GM12878 (cell line): ENCODE measurements at regions of chr3 and their contacts with region 1.

Region 1: DNA sequence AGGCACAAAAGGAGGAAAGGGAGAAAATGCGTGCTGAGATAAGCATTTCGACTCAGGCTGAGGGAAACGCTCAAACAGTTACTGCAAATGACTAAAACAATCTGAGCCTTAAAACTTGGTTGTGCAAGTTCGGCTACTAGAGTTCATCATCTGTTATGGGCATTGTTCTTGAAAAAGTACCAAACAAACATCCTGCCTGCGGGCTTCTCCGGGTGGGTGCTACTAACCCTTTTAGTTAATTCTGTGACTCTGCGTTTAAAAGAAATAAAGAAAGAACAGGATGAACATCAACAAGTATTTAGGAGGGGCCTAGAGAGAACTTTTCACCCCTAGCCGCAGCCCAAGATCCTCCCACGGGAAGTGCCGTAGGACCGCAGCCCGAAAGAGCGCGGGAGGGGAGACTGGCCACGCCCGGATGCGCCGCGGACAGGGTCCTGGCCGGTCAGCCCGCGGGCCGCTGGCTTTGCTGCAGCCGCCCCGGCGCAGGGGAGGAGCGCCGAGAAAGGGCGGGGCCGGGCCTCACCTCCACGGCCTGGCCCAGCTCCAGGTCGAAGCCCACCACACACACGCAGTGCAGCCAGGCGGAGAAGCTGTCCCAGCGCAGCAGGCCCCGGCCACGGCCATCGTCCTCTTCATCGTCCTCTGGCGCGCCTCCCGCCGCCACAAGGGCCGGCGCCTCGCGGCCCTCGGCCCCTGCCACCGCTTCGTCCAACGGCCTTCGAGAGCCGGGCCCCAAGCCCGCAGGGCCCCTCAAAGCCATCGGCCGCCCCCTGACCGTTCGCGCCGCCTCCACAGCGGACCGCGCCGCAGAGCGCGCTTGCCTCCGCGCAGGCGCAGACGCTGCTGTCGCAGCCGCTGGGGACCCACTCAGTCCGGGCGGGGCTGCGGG is at the start of gene DENND6A:
- DNase-seq: peak; percentile 69
- ATAC-seq: peak; percentile 91
- H3K4me3 ChIP-seq: peak within 1 kb of the TSS; percentile 72
- H3K27ac ChIP-seq: peak within 1 kb of the TSS; percentile 88
- H3K4me1 ChIP-seq: peaks cover 15% of the 10 kb centered on the region; the same call in 1 of the 2 replicates
- H3K27me3 ChIP-seq: no peaks in the 10 kb centered on the region
- CTCF ChIP-seq: no peak
- EP300 ChIP-seq: no peak
- POLR2A ChIP-seq: peak; percentile 92
- RAD21 ChIP-seq: no peak
- polyA plus RNA-seq, gene DENND6A: 1.8 to 3.5 TPM

Region 2: GRCh38 chr3:57555738-57556458 is 136.6 kb before region 1 on chr3 and contains the start of gene PDE12:
- CTCF ChIA-PET with region 1: interaction called, 4 read pairs
- POLR2A ChIA-PET with region 1: no interaction called
- RAD21 ChIA-PET with region 1: interaction called, 9 read pairs
- SMC1A ChIA-PET with region 1: interaction called, 7 read pairs
- in situ Hi-C with region 1: no loop called
- intact Hi-C with region 1: loop called (anchors 5 kb)
- DNase-seq: peak; percentile 95
- ATAC-seq: peak; percentile 92
- H3K4me3 ChIP-seq: peak within 1 kb of the TSS; percentile 76
- H3K27ac ChIP-seq: peak within 1 kb of the TSS; percentile 99
- H3K4me1 ChIP-seq: no peaks in the 10 kb centered on the region; the same call in none of the 2 replicates
- H3K27me3 ChIP-seq: no peaks in the 10 kb centered on the region
- CTCF ChIP-seq: no peak
- EP300 ChIP-seq: peak in 1 of 2 experiments; percentile 100; a peak in 3 of 4 replicates
- POLR2A ChIP-seq: peak; percentile 98
- RAD21 ChIP-seq: no peak
- polyA plus RNA-seq, gene PDE12: 3.0 to 10.1 TPM

Region 3: GRCh38 chr3:57597122-57597923 is 95.2 kb before region 1 on chr3 and contains the start of gene ARF4:
- CTCF ChIA-PET with region 1: interaction called, 5 read pairs
- POLR2A ChIA-PET with region 1: interaction called, 14 read pairs
- RAD21 ChIA-PET with region 1: interaction called, 6 read pairs
- SMC1A ChIA-PET with region 1: interaction called, 4 read pairs
- in situ Hi-C with region 1: no loop called
- intact Hi-C with region 1: loop called (anchors 1 kb)
- DNase-seq: peak; percentile 99
- ATAC-seq: peak; percentile 92
- H3K4me3 ChIP-seq: peak within 1 kb of the TSS; percentile 91
- H3K27ac ChIP-seq: peak within 1 kb of the TSS; percentile 95
- H3K4me1 ChIP-seq: no peaks in the 10 kb centered on the region; the same call in 1 of the 2 replicates
- H3K27me3 ChIP-seq: no peaks in the 10 kb centered on the region
- CTCF ChIP-seq: peak in 2 of 3 experiments; percentile 7 to 20; a peak in 1 of 6 replicates
- EP300 ChIP-seq: peak in 1 of 2 experiments; percentile 63; a peak in 2 of 4 replicates
- POLR2A ChIP-seq: peak; percentile 83
- RAD21 ChIP-seq: no peak
- polyA plus RNA-seq, gene ARF4: 166 to 283 TPM

Region 4: GRCh38 chr3:57675530-57675929 is 17.0 kb before region 1 on chr3:
- CTCF ChIA-PET with region 1: interaction called, 28 read pairs
- POLR2A ChIA-PET with region 1: interaction called, 39 read pairs
- RAD21 ChIA-PET with region 1: interaction called, 22 read pairs
- SMC1A ChIA-PET with region 1: interaction called, 68 read pairs
- in situ Hi-C with region 1: no loop called
- intact Hi-C with region 1: loop called (anchors 1 kb)
- DNase-seq: no peak
- ATAC-seq: peak; percentile 47
- H3K4me3 ChIP-seq: no peak overlapping the region
- H3K27ac ChIP-seq: no peak overlapping the region
- H3K4me1 ChIP-seq: peaks cover 13% of the 10 kb centered on the region
- H3K27me3 ChIP-seq: no peaks in the 10 kb centered on the region
- CTCF ChIP-seq: no peak
- EP300 ChIP-seq: no peak
- POLR2A ChIP-seq: no peak
- RAD21 ChIP-seq: no peak

Region 5: DNA sequence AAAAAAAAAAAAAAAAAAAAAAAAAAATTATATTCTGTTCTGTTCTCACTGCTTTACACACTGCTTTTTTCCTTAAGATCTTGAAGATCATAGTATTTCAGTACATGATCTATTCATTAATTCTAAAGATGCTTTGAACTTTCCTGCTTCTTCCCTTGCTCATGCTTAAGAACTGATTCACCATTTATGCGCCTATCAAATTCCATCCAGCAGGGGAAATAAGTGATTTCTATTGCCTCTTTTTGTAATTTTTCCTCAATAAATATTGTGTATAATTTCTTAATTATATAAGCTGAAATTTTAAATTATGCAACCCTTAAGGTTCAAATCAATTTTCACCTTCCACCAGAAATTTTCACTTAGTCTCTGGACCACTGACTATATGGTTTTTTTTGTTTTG is 10.2 kb before region 1 on chr3:
- CTCF ChIA-PET with region 1: interaction called, 6 read pairs
- POLR2A ChIA-PET with region 1: interaction called, 13 read pairs
- RAD21 ChIA-PET with region 1: interaction called, 5 read pairs
- SMC1A ChIA-PET with region 1: interaction called, 11 read pairs
- in situ Hi-C with region 1: no loop called
- intact Hi-C with region 1: no loop called
- DNase-seq: no peak
- ATAC-seq: no peak
- H3K4me3 ChIP-seq: no peak overlapping the region
- H3K27ac ChIP-seq: no peak overlapping the region
- H3K4me1 ChIP-seq: peaks cover 2% of the 10 kb centered on the region; the same call in 1 of the 2 replicates
- H3K27me3 ChIP-seq: no peaks in the 10 kb centered on the region
- CTCF ChIP-seq: no peak
- EP300 ChIP-seq: no peak
- POLR2A ChIP-seq: no peak
- RAD21 ChIP-seq: no peak

Region 6: DNA sequence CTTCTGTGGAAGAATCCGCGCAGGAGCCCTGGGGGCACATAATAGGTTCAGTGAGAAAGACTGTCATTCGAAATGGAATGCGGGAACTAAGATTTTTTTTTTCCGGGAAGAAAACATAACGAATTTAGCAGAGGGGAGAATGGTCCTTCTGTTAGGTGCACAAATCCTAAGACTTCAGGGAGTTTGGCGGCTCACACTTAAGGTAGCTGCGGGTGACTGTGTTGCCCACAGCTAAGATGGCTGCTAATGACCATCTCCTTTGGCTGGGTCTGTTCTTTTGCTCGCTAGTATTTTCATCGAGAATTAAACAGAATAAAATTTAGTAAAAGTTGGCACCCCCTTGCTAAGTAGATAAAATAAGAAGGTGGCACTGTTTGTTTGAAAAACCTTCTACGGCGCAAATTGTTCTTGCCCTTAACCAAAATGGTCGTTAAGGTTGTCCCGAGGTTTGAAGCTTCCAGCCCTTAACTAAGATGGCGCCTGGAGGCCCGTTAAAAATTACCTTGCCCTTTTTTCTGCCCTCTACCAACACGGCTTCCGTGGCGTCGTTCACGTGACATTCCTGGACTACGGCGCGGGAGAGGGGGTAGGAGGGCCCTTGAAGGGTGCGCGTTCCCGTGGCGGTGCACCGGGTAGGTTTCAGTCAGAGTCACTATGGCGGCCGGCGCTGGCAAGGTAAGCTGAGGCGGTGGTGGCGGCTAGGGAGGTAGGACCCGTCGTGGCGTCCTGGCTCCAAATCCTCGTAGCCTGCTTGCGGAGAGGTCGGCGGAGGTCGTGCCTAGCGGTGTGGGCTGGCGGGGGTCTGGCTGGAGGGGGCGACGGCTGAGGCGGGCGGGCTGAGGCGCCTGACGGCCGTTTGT is 63.4 kb after region 1 on chr3 and contains the start of gene SLMAP:
- CTCF ChIA-PET with region 1: interaction called, 5 read pairs
- POLR2A ChIA-PET with region 1: interaction called, 6 read pairs
- RAD21 ChIA-PET with region 1: interaction called, 4 read pairs
- SMC1A ChIA-PET with region 1: interaction called, 4 read pairs
- in situ Hi-C with region 1: no loop called
- intact Hi-C with region 1: loop called (anchors 1 kb)
- DNase-seq: peak; percentile 90
- ATAC-seq: peak; percentile 95
- H3K4me3 ChIP-seq: peak within 1 kb of the TSS; percentile 77
- H3K27ac ChIP-seq: peak within 1 kb of the TSS; percentile 91
- H3K4me1 ChIP-seq: peaks cover 6% of the 10 kb centered on the region; the same call in 1 of the 2 replicates
- H3K27me3 ChIP-seq: no peaks in the 10 kb centered on the region
- CTCF ChIP-seq: no peak
- EP300 ChIP-seq: 0 out of 4 replicates have a peak, but pooled peaks of 1 of the 2 experiments have one; percentile 30
- POLR2A ChIP-seq: peak; percentile 98
- RAD21 ChIP-seq: no peak
- polyA plus RNA-seq, gene SLMAP: 8.3 to 10.4 TPM